H1 (cell line): ENCODE measurements at regions of chr6 and their contacts with region 1.

Region 1: GRCh38 chr6:5030596-5031136 is 26.8 kb upstream of the RPP40 start:
- DNase-seq: peak; percentile 87 to 95
- H3K4me3 ChIP-seq: no peak overlapping the region
- H3K27ac ChIP-seq: no peak overlapping the region
- H3K4me1 ChIP-seq: peaks cover 2 to 7% (median 5%) of the 10 kb centered on the region in 4 experiments; a peak in 5 of 7 replicates
- H3K27me3 ChIP-seq: no peaks in the 10 kb centered on the region; a peak in 2 of 7 replicates
- CTCF ChIP-seq: peak; percentile 81 to 95 (median 85)
- EP300 ChIP-seq: no peak
- POLR2A ChIP-seq: no peak
- RAD21 ChIP-seq: peak; percentile 87 to 95

Region 2: GRCh38 chr6:3797231-3798054 is 1233.2 kb before region 1 on chr6:
- CTCF ChIA-PET with region 1: no interaction called
- POLR2A ChIA-PET with region 1: no interaction called
- DNase-seq: no peak
- H3K4me3 ChIP-seq: no peak overlapping the region
- H3K27ac ChIP-seq: no peak overlapping the region
- H3K4me1 ChIP-seq: peaks cover 1 to 10% (median 6%) of the 10 kb centered on the region in 4 experiments; a peak in 6 of 7 replicates
- H3K27me3 ChIP-seq: no peaks in the 10 kb centered on the region; a peak in 3 of 7 replicates
- CTCF ChIP-seq: no peak
- EP300 ChIP-seq: no peak
- POLR2A ChIP-seq: no peak
- RAD21 ChIP-seq: no peak

Region 3: DNA sequence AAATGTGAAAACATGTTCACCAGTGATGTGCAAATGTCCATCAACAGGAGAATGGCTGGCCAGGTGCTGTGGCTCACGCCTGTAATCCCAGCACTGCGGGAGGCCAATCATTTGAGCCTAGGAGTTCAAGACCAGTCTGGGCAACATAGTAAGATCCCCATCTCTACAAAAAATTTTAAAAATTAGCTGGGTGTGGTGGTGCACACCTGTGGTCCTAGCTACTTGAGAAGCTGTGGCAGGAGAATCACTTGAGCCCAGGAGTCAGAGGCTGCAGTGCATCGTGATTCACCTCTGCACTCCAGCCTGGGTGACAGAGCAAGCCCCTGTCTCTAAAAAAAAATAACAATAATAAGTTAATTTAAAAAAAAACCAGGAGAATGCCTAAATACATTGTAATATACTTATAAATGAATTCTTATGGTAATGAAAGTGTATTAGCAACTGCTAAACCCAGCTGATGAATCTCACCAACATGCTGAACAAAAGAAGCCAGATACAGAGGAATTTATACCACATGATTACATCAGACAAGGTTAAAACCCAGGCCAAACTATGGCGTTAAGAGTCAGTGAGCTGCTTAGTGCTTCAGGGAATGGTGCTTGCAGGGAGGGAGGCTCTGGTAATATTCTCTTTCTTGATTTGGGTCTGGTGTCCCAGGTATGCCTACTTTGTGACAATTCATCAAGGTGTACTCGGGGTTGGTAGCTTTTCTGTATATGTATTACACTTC is 63.2 kb before region 1 on chr6:
- CTCF ChIA-PET with region 1: interaction called, 12 read pairs
- POLR2A ChIA-PET with region 1: no interaction called
- DNase-seq: no peak
- H3K4me3 ChIP-seq: no peak overlapping the region
- H3K27ac ChIP-seq: no peak overlapping the region
- H3K4me1 ChIP-seq: peaks cover 0 to 6% (median 4%) of the 10 kb centered on the region in 4 experiments; a peak in 4 of 7 replicates
- H3K27me3 ChIP-seq: no peaks in the 10 kb centered on the region; a peak in 1 of 7 replicates
- CTCF ChIP-seq: no peak
- EP300 ChIP-seq: no peak
- POLR2A ChIP-seq: no peak
- RAD21 ChIP-seq: no peak

Region 4: GRCh38 chr6:5007531-5007930 is 23.1 kb before region 1 on chr6:
- CTCF ChIA-PET with region 1: interaction called, 17 read pairs
- POLR2A ChIA-PET with region 1: interaction called, 3 read pairs
- DNase-seq: no peak
- H3K4me3 ChIP-seq: no peak overlapping the region
- H3K27ac ChIP-seq: no peak overlapping the region
- H3K4me1 ChIP-seq: peaks cover 0 to 5% (median 2%) of the 10 kb centered on the region in 4 experiments; a peak in 3 of 7 replicates
- H3K27me3 ChIP-seq: no peaks in the 10 kb centered on the region; a peak in 1 of 7 replicates
- CTCF ChIP-seq: no peak
- EP300 ChIP-seq: no peak
- POLR2A ChIP-seq: no peak
- RAD21 ChIP-seq: no peak

Region 5: DNA sequence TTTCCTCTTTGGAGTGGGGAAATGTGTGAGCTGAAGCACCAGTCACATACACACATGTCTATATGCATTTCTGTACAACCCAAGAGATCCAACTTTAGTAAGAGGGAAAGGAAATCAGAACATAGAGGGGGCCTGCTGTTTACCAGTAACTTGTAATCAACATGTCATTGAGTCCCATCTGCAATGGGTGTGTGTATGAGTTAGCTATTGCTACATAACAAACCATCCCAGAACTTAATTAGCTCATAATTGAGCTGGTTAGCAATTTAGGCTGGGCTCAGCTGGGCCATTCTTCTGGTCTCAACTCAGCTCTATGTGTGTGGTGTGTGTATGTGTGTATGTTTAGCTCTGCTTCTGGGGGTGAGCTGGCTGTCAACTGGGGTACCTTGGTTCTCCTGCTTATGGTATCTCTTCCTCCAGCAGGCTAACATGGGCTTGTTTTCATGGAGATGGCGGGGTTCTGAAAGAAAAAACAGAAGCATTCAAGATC is 16.5 kb before region 1 on chr6:
- CTCF ChIA-PET with region 1: interaction called, 17 read pairs
- POLR2A ChIA-PET with region 1: interaction called, 5 read pairs
- DNase-seq: no peak
- H3K4me3 ChIP-seq: no peak overlapping the region
- H3K27ac ChIP-seq: no peak overlapping the region
- H3K4me1 ChIP-seq: peaks cover 0 to 2% (median 0%) of the 10 kb centered on the region in 4 experiments; a peak in 1 of 7 replicates
- H3K27me3 ChIP-seq: no peaks in the 10 kb centered on the region
- CTCF ChIP-seq: no peak
- EP300 ChIP-seq: no peak
- POLR2A ChIP-seq: no peak
- RAD21 ChIP-seq: no peak

Region 6: GRCh38 chr6:5020142-5020541 is 10.5 kb before region 1 on chr6:
- CTCF ChIA-PET with region 1: interaction called, 20 read pairs
- POLR2A ChIA-PET with region 1: interaction called, 5 read pairs
- DNase-seq: no peak
- H3K4me3 ChIP-seq: no peak overlapping the region
- H3K27ac ChIP-seq: no peak overlapping the region
- H3K4me1 ChIP-seq: no peaks in the 10 kb centered on the region
- H3K27me3 ChIP-seq: no peaks in the 10 kb centered on the region; a peak in 1 of 7 replicates
- CTCF ChIP-seq: no peak
- EP300 ChIP-seq: no peak
- POLR2A ChIP-seq: no peak
- RAD21 ChIP-seq: no peak